Endothelial cell of umbilical vein (primary cell): ENCODE measurements at regions of chr2 and their contacts with region 1.

Region 1: DNA sequence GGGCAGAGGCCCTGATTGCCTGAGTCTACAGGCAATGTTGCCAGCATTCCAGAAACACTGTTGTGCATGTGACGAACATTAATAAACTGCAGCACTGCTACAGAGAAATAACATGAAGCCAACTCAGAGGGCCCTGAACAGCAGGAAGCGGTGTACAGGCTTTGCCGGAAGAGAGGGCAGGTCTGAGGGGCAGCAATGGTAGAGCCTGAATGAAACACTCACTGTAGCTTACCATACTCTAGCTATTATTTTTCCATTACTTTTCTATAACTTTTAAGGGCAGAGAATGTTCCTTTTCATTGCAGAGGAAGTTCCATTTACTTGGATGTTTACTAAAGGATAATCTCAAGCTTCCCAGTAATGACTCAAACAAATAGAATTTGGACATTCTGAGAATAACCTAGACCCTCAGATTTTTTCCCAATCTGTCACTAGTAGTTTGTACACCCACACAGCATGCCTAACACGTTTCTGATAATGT is 150.4 kb downstream of the MTX2 start:
- DNase-seq: peak; percentile 97
- H3K4me3 ChIP-seq: no peak overlapping the region
- H3K27ac ChIP-seq: peak overlapping the region; percentile 92
- H3K4me1 ChIP-seq: peaks cover 42% of the 10 kb centered on the region
- H3K27me3 ChIP-seq: no peaks in the 10 kb centered on the region
- CTCF ChIP-seq: no peak
- POLR2A ChIP-seq: peak; percentile 65

Region 2: DNA sequence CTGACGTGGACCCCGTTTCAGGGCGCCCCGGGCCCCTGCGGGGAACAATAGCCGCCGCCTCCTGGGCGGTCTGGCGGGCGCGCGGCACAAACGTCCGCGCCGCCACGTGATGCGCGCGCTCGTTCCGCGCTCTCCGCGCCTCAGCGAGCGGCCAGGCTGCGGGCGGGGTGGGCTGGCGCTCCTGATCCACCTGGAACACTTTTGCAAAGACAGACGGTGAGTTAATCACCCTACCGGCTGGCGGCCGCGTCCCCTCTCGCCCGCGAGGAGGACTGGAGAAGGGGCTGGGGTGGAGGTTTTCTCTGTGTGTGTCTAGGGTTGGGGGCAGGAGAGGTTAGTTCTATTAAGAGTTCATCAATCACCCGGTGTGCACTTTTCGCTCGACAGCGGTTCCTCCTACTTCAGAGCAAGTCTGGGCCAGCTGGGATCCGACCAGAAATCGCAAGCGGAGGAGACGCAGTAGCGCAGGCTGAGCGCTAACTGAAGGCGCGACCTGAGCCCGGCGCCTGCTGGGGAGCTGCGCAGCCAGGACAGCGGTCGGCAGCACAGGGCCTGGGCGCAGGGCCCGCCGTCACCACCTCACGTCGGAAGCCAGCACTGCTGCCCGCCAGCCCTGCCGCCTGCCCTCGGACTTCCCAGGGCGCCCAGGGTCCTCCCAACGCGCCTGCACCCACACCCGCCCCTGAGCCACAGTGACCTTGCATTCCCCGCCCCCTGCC is 241.4 kb before region 1 on chr2:
- CTCF ChIA-PET with region 1: no interaction called
- POLR2A ChIA-PET with region 1: no interaction called
- dilution Hi-C with region 1: no loop called
- intact Hi-C with region 1: loop called (anchors 1 kb)
- DNase-seq: peak; percentile 68
- H3K4me3 ChIP-seq: peak overlapping the region; percentile 33 to 49 (median 48)
- H3K27ac ChIP-seq: peak overlapping the region; percentile 77
- H3K4me1 ChIP-seq: peaks cover 30% of the 10 kb centered on the region
- H3K27me3 ChIP-seq: no peaks in the 10 kb centered on the region
- CTCF ChIP-seq: no peak
- POLR2A ChIP-seq: no peak

Region 3: DNA sequence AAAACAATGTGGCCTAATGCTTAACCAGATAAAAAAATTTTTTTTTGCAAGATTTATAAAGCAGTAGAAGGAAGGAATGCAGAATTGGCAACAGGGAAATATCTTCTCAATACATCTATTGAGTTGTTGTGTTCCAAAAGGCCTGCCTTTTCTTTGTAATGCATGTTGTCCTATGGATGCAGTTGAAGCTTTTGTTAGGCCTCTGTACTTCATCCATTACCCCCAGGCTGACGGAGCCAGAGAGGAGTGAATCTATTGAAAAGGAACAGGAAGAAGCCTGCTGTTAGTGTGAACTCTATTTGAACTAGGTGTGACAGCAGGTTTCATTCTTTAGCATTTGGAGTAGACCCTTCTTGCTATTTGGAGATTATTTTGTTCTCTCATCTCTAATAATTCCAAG is 93.9 kb before region 1 on chr2:
- CTCF ChIA-PET with region 1: no interaction called
- POLR2A ChIA-PET with region 1: no interaction called
- dilution Hi-C with region 1: no loop called
- intact Hi-C with region 1: no loop called
- DNase-seq: peak; percentile 15
- H3K4me3 ChIP-seq: no peak overlapping the region
- H3K27ac ChIP-seq: no peak overlapping the region
- H3K4me1 ChIP-seq: no peaks in the 10 kb centered on the region
- H3K27me3 ChIP-seq: no peaks in the 10 kb centered on the region
- CTCF ChIP-seq: no peak
- POLR2A ChIP-seq: no peak

Region 4: DNA sequence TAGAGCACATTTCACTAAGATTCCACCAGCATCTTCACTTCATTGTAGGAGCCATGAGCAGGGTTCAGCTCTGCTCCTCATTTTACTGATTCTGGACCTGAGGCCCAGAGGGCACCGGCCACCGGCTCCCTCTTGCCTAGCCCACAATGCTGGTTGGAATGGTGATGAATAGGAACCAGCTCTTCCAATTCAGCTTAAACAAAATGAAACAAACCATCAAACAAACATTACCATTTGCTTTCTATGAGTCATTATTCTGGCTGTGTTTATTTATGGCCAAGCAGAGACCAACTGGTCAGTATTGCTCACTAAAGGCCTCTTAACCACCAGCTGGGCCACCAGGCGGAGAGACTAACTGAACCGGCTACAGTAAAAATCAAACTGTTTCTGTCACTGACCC is 26.3 kb after region 1 on chr2:
- CTCF ChIA-PET with region 1: interaction called, 14 read pairs
- POLR2A ChIA-PET with region 1: no interaction called
- dilution Hi-C with region 1: no loop called
- intact Hi-C with region 1: loop called (anchors 1 kb)
- DNase-seq: peak; percentile 73
- H3K4me3 ChIP-seq: no peak overlapping the region
- H3K27ac ChIP-seq: peak overlapping the region; percentile 78
- H3K4me1 ChIP-seq: peaks cover 17% of the 10 kb centered on the region
- H3K27me3 ChIP-seq: no peaks in the 10 kb centered on the region
- CTCF ChIP-seq: no peak
- POLR2A ChIP-seq: no peak

Region 5: GRCh38 chr2:176518823-176519222 is 99.2 kb after region 1 on chr2:
- CTCF ChIA-PET with region 1: no interaction called
- POLR2A ChIA-PET with region 1: interaction called, 5 read pairs
- dilution Hi-C with region 1: no loop called
- intact Hi-C with region 1: loop called (anchors 2 kb)
- DNase-seq: peak; percentile 98
- H3K4me3 ChIP-seq: no peak overlapping the region
- H3K27ac ChIP-seq: peak overlapping the region; percentile 64
- H3K4me1 ChIP-seq: peaks cover 36% of the 10 kb centered on the region
- H3K27me3 ChIP-seq: no peaks in the 10 kb centered on the region
- CTCF ChIP-seq: peak in 1 of 2 donors; percentile 12
- POLR2A ChIP-seq: peak; percentile 31